Endothelial cell of umbilical vein (primary cell): ENCODE measurements at regions of chr1 and their contacts with region 1.

Region 1: GRCh38 chr1:234691567-234691966 is 81.6 kb upstream of the IRF2BP2 start:
- DNase-seq: peak; percentile 12
- H3K4me3 ChIP-seq: no peak overlapping the region
- H3K27ac ChIP-seq: no peak overlapping the region
- H3K4me1 ChIP-seq: no peaks in the 10 kb centered on the region
- H3K27me3 ChIP-seq: no peaks in the 10 kb centered on the region
- CTCF ChIP-seq: no peak
- POLR2A ChIP-seq: no peak

Region 2: GRCh38 chr1:234656856-234657654 is 34.5 kb before region 1 on chr1:
- CTCF ChIA-PET with region 1: interaction called, 3 read pairs
- POLR2A ChIA-PET with region 1: no interaction called
- dilution Hi-C with region 1: no loop called
- intact Hi-C with region 1: loop called (anchors 1 kb)
- DNase-seq: peak; percentile 92
- H3K4me3 ChIP-seq: no peak overlapping the region
- H3K27ac ChIP-seq: peak overlapping the region; percentile 82
- H3K4me1 ChIP-seq: peaks cover 33% of the 10 kb centered on the region
- H3K27me3 ChIP-seq: no peaks in the 10 kb centered on the region
- CTCF ChIP-seq: no peak
- POLR2A ChIP-seq: no peak

Region 3: DNA sequence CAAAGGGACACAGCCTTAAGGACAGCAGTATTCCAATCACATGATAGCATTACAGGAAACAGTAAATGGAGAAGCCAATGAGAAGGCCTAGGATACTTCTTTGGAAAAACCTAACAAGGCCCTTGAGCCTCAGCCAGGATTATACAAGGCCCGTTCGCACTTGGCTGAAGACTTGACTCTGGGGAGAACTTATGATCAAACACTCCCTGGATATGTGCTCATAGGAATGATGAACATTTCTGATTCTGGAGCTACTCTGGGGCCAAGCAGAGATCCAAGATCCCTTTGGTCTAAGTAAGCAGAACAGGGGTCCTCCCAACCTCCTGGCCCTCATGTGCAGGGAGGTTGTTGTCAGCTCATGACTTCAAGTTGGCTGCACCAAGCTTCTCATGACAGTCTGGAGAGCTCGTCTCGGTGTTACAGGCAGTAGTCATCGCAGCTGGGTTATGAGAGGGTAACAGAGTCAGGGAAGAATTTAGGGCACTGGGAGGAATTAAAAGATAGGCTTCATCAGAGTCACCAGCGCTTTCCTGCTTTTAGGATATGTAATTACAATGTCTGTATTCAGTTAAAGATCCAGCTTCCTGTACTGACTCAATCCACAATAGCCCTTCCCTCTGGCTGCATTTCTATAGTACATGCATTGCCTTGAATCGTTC is 10.9 kb after region 1 on chr1:
- CTCF ChIA-PET with region 1: interaction called, 11 read pairs
- POLR2A ChIA-PET with region 1: no interaction called
- dilution Hi-C with region 1: no loop called
- intact Hi-C with region 1: no loop called
- DNase-seq: peak; percentile 56
- H3K4me3 ChIP-seq: no peak overlapping the region
- H3K27ac ChIP-seq: no peak overlapping the region
- H3K4me1 ChIP-seq: peaks cover 9% of the 10 kb centered on the region
- H3K27me3 ChIP-seq: no peaks in the 10 kb centered on the region
- CTCF ChIP-seq: no peak
- POLR2A ChIP-seq: no peak